ENCODE measurements at regions of chr20 and their contacts with region 1.

Region 1: GRCh38 chr20:11544029-11544678 is 373.5 kb upstream of the BTBD3 start:
- DNase-seq: peak; percentile 79
- H3K4me3 ChIP-seq: peak overlapping the region in 2 of 3 experiments; percentile 16 to 31
- H3K27ac ChIP-seq: peak overlapping the region; percentile 88
- H3K4me1 ChIP-seq: peaks cover 17% of the 10 kb centered on the region
- H3K27me3 ChIP-seq: no peaks in the 10 kb centered on the region
- CTCF ChIP-seq: peak; percentile 38 to 60

Region 2: GRCh38 chr20:10090588-10091166 is 1453.5 kb before region 1 on chr20:
- CTCF ChIA-PET with region 1: no interaction called
- dilution Hi-C with region 1: no loop called
- in situ Hi-C with region 1: no loop called
- intact Hi-C with region 1: loop called (anchors 2 kb)
- DNase-seq: peak; percentile 58
- H3K4me3 ChIP-seq: no peak overlapping the region
- H3K27ac ChIP-seq: no peak overlapping the region
- H3K4me1 ChIP-seq: peaks cover 23% of the 10 kb centered on the region
- H3K27me3 ChIP-seq: no peaks in the 10 kb centered on the region
- CTCF ChIP-seq: peak; percentile 76 to 91

Region 3: GRCh38 chr20:10654630-10655029 is 889.5 kb before region 1 on chr20:
- CTCF ChIA-PET with region 1: no interaction called
- dilution Hi-C with region 1: no loop called
- in situ Hi-C with region 1: loop called in 1 of 2 experiments (anchors 25 kb)
- intact Hi-C with region 1: loop called (anchors 5 kb)
- DNase-seq: peak; percentile 94
- H3K4me3 ChIP-seq: no peak overlapping the region
- H3K27ac ChIP-seq: peak overlapping the region; percentile 47
- H3K4me1 ChIP-seq: peaks cover 33% of the 10 kb centered on the region
- H3K27me3 ChIP-seq: no peaks in the 10 kb centered on the region
- CTCF ChIP-seq: no peak

Region 4: GRCh38 chr20:11140359-11140758 is 403.8 kb before region 1 on chr20:
- CTCF ChIA-PET with region 1: no interaction called
- dilution Hi-C with region 1: no loop called
- in situ Hi-C with region 1: no loop called
- intact Hi-C with region 1: loop called (anchors 5 kb)
- DNase-seq: peak; percentile 98
- H3K4me3 ChIP-seq: no peak overlapping the region
- H3K27ac ChIP-seq: peak overlapping the region; percentile 74
- H3K4me1 ChIP-seq: peaks cover 21% of the 10 kb centered on the region
- H3K27me3 ChIP-seq: no peaks in the 10 kb centered on the region
- CTCF ChIP-seq: peak in 1 of 2 donors; percentile 42

Region 5: DNA sequence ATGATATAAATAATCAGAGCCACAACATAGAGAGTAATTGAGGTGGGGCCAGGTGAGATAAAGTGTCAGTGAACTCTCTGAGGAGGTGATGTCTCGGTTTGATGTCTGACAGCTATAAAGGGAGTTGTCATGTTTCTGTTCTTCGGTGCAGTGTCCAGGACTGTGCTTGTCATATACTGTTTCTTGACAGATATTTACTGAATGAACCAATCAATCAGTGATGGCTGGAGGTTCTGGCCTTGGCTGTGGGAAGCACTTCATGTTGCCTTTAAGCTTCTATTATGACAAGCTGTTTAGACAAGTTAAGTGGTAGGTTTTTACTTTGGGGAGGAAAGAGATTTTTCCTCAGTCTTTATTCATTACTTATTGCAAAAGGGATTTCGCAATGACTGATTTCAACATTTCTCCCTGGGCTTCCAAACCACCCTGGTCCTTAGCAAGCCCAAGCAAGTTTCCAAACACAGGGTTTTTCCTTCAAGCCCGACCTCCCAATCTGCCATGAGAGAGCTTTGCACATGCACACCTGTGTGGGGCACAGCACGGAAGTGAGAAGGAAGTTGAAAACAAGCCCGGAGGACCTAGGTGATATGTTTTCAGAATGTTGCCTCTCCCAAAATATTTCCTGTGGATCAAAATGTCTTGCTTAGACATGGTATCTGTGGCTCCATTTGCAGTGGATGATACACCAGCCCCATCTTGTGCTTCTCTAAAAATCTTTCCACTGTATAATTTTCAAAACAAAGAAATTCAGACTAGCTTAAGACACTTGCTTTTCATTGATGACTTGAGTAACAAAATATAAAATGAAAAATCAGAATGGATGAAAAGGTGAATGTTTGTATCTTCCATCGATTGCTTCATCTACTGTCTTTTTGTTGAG is 193.8 kb before region 1 on chr20:
- CTCF ChIA-PET with region 1: no interaction called
- dilution Hi-C with region 1: no loop called
- in situ Hi-C with region 1: no loop called
- intact Hi-C with region 1: loop called (anchors 1 kb)
- DNase-seq: peak; percentile 98
- H3K4me3 ChIP-seq: no peak overlapping the region
- H3K27ac ChIP-seq: peak overlapping the region; percentile 59
- H3K4me1 ChIP-seq: peaks cover 25% of the 10 kb centered on the region
- H3K27me3 ChIP-seq: no peaks in the 10 kb centered on the region
- CTCF ChIP-seq: peak; percentile 28 to 59

Region 6: DNA sequence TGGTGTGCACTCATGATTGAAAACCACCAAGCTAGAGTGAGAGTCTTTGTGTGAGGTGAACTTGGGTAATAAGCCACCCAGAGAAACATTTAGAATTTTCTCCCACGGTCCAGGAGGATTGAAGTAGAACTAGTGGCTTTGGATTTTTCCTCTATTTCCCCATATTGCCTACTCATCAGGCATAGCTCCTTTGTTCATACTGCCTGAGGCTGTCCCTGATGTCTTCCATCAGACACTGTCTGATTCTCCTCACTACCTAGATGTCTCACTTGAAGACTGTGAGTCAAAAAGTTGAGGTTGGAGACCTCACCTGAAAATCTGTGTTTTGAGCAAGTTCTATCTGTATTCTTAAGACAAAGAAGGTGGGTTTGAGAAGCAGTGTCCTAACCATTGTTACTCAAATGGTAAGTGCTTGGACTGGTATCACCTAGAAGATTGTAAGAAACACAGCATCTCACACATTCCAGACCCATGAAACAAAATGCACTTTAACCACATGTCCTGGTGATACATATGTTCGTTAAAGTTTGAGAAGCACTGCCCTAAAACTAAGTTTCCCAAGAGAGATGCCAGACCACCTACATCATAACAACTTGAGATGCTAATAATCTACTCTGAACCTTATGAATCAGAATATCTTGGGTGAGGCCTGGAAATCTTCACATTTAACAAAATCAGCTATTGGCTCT is 149.9 kb before region 1 on chr20:
- CTCF ChIA-PET with region 1: no interaction called
- dilution Hi-C with region 1: no loop called
- in situ Hi-C with region 1: loop called in 1 of 2 experiments (anchors 25 kb)
- intact Hi-C with region 1: loop called (anchors 2 kb)
- DNase-seq: peak; percentile 97
- H3K4me3 ChIP-seq: no peak overlapping the region
- H3K27ac ChIP-seq: peak overlapping the region; percentile 95
- H3K4me1 ChIP-seq: peaks cover 31% of the 10 kb centered on the region
- H3K27me3 ChIP-seq: no peaks in the 10 kb centered on the region
- CTCF ChIP-seq: no peak

Region 7: GRCh38 chr20:11445161-11445560 is 99.0 kb before region 1 on chr20:
- CTCF ChIA-PET with region 1: no interaction called
- dilution Hi-C with region 1: no loop called
- in situ Hi-C with region 1: no loop called
- intact Hi-C with region 1: no loop called
- DNase-seq: no peak
- H3K4me3 ChIP-seq: no peak overlapping the region
- H3K27ac ChIP-seq: no peak overlapping the region
- H3K4me1 ChIP-seq: peaks cover 4% of the 10 kb centered on the region
- H3K27me3 ChIP-seq: no peaks in the 10 kb centered on the region
- CTCF ChIP-seq: no peak

Measured in mammary epithelial cell (primary cell).